ENCODE measurements at regions of chr19 and their contacts with region 1.

Region 1: DNA sequence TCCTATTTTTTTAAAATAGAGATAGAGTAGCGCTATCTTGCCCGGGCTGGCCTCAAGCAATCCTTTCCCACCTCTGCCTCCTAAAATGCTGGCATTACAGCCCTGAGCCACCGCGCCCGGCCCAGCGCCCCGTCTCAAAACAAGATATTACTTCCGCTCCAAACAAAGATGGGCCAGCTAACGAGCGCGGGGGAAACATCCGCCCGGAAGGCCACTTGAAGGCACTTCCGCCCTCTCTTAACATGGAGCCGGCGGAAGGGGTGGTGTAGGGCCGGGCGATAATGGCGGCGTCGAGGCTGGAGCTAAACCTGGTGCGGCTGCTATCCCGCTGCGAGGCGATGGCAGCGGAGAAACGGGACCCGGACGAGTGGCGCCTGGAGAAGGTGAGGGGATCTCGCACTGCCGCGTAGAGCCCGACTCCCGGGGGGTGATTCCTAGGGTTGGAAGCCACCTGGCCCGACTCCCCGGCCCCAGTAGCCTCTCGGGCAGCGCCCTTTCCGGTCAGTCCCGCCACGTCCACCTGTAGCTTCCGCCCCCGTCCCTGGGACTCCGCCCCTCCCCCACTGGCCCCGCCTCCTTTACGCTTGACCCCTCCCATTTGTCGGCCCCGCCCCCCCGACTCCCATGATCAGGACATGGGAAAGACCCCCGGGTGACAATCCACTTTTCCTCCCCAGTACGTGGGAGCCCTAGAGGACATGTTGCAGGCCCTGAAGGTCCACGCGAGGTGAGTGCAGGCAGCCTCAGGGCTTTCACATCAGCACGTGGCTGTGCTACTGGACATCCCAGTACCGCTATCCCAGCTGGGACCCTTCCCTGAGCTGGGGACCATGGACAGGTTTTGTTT is at the start of gene USE1:
- DNase-seq: peak; percentile 88
- H3K4me3 ChIP-seq: peak within 1 kb of the TSS; percentile 77 to 87 (median 80)
- H3K27ac ChIP-seq: peak within 1 kb of the TSS; percentile 81
- H3K4me1 ChIP-seq: peaks cover 11% of the 10 kb centered on the region
- H3K27me3 ChIP-seq: no peaks in the 10 kb centered on the region
- CTCF ChIP-seq: no peak
- total RNA-seq, gene USE1: 18.4 to 24.0 TPM

Region 2: GRCh38 chr19:17266975-17267788 is 51.8 kb after region 1 on chr19 and contains the start of gene BABAM1:
- CTCF ChIA-PET with region 1: no interaction called
- dilution Hi-C with region 1: no loop called
- in situ Hi-C with region 1: no loop called
- intact Hi-C with region 1: loop called (anchors 2 kb)
- DNase-seq: peak; percentile 99
- H3K4me3 ChIP-seq: peak within 1 kb of the TSS; percentile 64 to 92 (median 72)
- H3K27ac ChIP-seq: peak within 1 kb of the TSS; percentile 63
- H3K4me1 ChIP-seq: peaks cover 9% of the 10 kb centered on the region
- H3K27me3 ChIP-seq: no peaks in the 10 kb centered on the region
- CTCF ChIP-seq: no peak
- total RNA-seq, gene BABAM1: 59.0 to 70.7 TPM

Measured in mammary epithelial cell (primary cell).